GM13977 (cell line): ENCODE measurements at regions of chr9 and their contacts with region 1.

Region 1: GRCh38 chr9:97475059-97475458 is 26.4 kb upstream of the TMOD1 start:
- DNase-seq: no peak
- CTCF ChIP-seq: no peak

Region 2: DNA sequence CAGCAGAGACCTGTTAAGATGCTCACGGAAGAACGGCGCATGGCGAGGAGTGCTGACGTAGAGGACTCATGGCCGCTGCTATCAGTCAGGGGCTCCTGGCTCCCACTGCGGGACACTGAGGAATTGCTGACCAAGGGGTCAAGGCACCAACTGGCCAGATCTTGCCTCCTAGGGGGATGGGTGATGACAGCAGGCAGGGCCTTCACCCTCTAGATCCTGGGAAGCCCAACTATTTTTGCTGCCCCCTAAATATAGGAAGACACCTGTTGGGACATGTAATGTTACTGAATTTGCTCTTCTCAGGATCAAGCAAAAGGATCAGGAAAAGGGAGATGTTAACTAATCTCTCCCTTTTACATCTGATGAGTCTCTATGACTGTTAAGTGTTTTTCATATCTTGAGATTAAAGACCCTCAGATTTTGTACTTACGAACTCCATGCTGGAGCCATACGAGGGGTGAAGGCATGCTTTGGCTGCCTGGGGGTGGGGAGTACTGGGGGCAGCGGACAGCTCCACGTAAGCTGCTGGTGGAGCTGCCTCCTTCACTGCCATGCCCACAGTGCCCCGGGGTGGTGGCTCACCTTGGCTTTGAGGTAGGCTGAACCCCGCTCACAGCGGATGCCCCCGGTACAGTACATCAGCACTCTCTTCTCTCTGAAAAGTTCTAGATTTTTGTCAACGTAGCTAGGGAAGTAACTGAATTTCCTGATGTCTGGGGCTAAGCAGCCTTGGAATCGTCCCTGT is 130.0 kb after region 1 on chr9:
- in situ Hi-C with region 1: loop called (anchors 5 kb)
- DNase-seq: no peak
- CTCF ChIP-seq: no peak

Region 3: DNA sequence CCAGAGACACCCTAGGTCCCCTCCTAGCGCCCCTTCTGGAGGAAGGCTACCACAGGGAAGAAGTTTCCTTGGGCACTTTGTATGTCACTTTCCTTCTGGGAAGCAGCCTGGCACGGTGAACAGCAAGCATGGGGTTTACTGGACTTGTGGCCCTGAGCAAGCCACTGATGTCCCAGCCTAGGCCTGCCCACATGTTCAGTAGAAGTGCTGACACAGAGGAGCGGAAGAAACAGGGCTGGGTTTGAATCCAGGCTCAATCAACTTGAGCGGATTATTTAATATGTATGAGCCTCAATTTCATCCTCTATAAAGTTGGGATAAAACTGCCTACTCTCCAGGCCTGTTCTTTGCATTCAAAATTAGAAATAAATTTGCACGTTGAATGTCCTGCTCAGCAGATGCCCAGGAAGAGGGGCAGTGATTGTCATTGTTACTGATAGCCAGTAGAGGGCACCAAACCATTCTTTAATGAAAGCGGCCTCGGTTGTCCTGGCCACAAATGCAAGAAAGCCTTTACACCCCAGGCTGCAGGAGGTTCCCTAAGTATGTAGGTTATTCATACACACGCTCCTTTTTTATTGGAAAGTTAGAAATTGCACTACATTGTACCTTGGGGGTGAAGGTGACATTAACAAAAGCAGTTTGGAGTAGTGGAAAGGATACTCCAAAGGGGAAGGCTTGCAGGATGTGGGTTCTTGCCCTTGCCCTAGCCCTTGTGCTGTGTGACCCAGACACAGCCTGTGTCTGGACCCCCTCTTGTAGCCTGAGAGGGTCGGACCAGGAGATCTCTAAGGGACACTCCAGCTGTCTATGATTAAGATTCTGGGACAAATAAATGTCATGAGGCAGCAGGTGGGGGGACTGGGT is 235.5 kb after region 1 on chr9:
- in situ Hi-C with region 1: no loop called
- DNase-seq: peak; percentile 77
- CTCF ChIP-seq: peak; percentile 84

Region 4: DNA sequence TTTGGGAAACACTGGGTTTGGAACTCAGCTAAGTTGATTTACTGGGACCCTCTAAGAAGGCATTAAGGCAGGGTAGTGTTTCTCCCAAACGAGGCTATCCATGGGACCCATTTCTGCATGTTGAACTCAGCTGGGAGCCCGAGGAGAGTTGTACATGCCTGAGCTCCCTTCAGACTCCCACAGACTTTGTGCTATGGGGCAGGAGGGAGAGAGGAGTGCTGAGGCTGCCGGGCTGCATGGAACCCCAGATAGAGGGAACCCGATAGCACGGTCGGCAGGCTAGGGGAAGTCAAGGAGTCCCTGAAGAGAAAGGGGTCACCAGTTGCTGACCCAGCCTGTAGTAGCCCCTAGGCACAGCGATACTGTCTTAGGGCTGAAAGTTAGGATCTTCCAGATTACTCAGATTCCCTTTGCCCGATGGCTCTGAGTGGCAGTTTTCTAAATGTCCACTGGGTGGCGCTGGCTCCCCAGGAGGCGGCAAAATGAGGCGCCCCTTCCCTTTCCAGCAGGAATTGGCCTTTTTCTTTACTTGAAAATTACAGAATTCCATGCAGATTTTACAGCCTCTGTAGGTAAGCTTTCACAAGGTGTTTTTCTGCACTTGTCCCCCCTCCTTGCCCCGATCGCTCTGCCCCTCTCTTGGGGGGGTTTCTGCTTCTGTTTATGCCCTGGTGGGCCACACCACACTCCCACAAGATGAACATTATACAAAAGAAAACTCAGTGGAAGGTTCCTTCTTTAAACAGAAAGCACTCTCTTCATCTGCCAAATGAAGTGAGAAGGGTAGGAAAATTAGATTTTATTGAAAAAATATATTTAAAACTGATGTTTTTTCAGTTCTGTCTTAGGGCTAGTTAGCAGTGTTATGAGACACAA is 599.3 kb after region 1 on chr9:
- in situ Hi-C with region 1: no loop called
- DNase-seq: peak; percentile 71
- CTCF ChIP-seq: peak; percentile 92